A673 (cell line): ENCODE measurements at regions of chr15 and their contacts with region 1.

Region 1: GRCh38 chr15:71786673-71787072 is 23.7 kb upstream of the NR2E3 start:
- DNase-seq: no peak
- H3K4me3 ChIP-seq: no peak overlapping the region
- H3K27ac ChIP-seq: no peak overlapping the region
- H3K4me1 ChIP-seq: no peaks in the 10 kb centered on the region
- H3K27me3 ChIP-seq: no peaks in the 10 kb centered on the region
- CTCF ChIP-seq: no peak

Region 2: GRCh38 chr15:71239592-71240364 is 546.9 kb before region 1 on chr15:
- CTCF ChIA-PET with region 1: no interaction called
- POLR2A ChIA-PET with region 1: no interaction called
- intact Hi-C with region 1: no loop called
- DNase-seq: no peak
- H3K4me3 ChIP-seq: no peak overlapping the region
- H3K27ac ChIP-seq: no peak overlapping the region
- H3K4me1 ChIP-seq: no peaks in the 10 kb centered on the region
- H3K27me3 ChIP-seq: no peaks in the 10 kb centered on the region
- CTCF ChIP-seq: no peak

Region 3: GRCh38 chr15:71999807-72000206 is 213.1 kb after region 1 on chr15:
- CTCF ChIA-PET with region 1: interaction called, 14 read pairs
- POLR2A ChIA-PET with region 1: no interaction called
- intact Hi-C with region 1: no loop called
- DNase-seq: no peak
- H3K4me3 ChIP-seq: no peak overlapping the region
- H3K27ac ChIP-seq: no peak overlapping the region
- H3K4me1 ChIP-seq: peaks cover 15% of the 10 kb centered on the region
- H3K27me3 ChIP-seq: no peaks in the 10 kb centered on the region
- CTCF ChIP-seq: no peak